MCF 10A (cell line): ENCODE measurements at regions of chr1 and their contacts with region 1.

Region 1: DNA sequence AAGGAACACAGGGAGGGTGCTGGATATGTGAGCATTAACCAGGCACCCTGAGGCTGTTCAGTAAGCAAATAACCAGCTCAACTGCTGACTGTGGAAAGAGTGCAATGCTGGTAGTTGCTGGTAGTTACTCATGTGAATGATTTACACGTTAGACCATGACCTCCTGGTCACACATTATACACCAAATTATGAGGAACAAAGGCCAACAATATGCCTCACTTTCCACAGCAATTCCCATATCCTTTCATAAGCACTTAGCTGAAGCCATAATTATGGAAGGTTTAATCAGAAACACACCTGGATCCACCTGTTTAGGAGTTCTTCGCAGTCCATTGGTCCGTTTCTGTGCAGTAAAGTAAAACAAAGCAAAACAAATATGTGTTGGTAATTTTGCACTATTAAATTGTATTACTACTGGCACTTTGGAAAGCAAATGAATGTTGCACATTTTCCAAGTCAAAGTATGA is 281.8 kb downstream of the VAV3 start:
- DNase-seq: peak; percentile 40
- H3K4me3 Mint-ChIP-seq: peak overlapping the region; percentile 60
- H3K27ac Mint-ChIP-seq: peak overlapping the region; percentile 85
- H3K4me1 Mint-ChIP-seq: peaks cover 33% of the 10 kb centered on the region
- H3K27me3 Mint-ChIP-seq: no peaks in the 10 kb centered on the region
- CTCF ChIP-seq: no peak

Region 2: GRCh38 chr1:107600607-107601160 is 82.5 kb before region 1 on chr1:
- CTCF ChIA-PET with region 1: no interaction called
- POLR2A ChIA-PET with region 1: no interaction called
- intact Hi-C with region 1: no loop called
- DNase-seq: no peak
- H3K4me3 Mint-ChIP-seq: no peak overlapping the region
- H3K27ac Mint-ChIP-seq: no peak overlapping the region
- H3K4me1 Mint-ChIP-seq: peaks cover 4% of the 10 kb centered on the region
- H3K27me3 Mint-ChIP-seq: no peaks in the 10 kb centered on the region
- CTCF ChIP-seq: no peak

Region 3: GRCh38 chr1:107648071-107648470 is 35.2 kb before region 1 on chr1:
- CTCF ChIA-PET with region 1: interaction called, 4 read pairs
- POLR2A ChIA-PET with region 1: interaction called, 22 read pairs
- intact Hi-C with region 1: no loop called
- DNase-seq: peak; percentile 73
- H3K4me3 Mint-ChIP-seq: no peak overlapping the region
- H3K27ac Mint-ChIP-seq: peak overlapping the region; percentile 54
- H3K4me1 Mint-ChIP-seq: peaks cover 35% of the 10 kb centered on the region
- H3K27me3 Mint-ChIP-seq: no peaks in the 10 kb centered on the region
- CTCF ChIP-seq: no peak

Region 4: GRCh38 chr1:107662971-107663370 is 20.3 kb before region 1 on chr1:
- CTCF ChIA-PET with region 1: interaction called, 8 read pairs
- POLR2A ChIA-PET with region 1: interaction called, 48 read pairs
- intact Hi-C with region 1: no loop called
- DNase-seq: no peak
- H3K4me3 Mint-ChIP-seq: no peak overlapping the region
- H3K27ac Mint-ChIP-seq: no peak overlapping the region
- H3K4me1 Mint-ChIP-seq: no peaks in the 10 kb centered on the region
- H3K27me3 Mint-ChIP-seq: no peaks in the 10 kb centered on the region
- CTCF ChIP-seq: no peak

Region 5: DNA sequence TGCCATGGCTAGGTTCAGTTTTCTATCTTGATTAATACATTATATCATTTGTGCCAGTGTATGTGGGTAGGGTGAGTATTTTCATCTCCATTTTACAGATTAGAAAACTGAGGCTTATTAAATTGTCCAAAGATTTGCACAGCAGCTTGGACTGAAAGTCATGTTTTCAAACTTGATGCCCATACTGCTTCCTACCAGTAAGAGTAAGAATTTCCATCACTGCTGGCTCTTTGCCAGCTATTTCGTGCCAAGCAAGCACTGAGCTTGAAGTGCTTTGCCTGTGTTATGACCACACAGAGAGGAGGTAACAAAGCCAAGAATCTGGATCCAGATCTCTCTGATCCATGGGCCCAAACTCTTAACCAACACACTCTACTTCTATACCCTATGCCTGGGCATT is 13.2 kb before region 1 on chr1:
- CTCF ChIA-PET with region 1: interaction called, 8 read pairs
- POLR2A ChIA-PET with region 1: interaction called, 48 read pairs
- intact Hi-C with region 1: no loop called
- DNase-seq: peak; percentile 86
- H3K4me3 Mint-ChIP-seq: no peak overlapping the region
- H3K27ac Mint-ChIP-seq: no peak overlapping the region
- H3K4me1 Mint-ChIP-seq: peaks cover 18% of the 10 kb centered on the region
- H3K27me3 Mint-ChIP-seq: no peaks in the 10 kb centered on the region
- CTCF ChIP-seq: no peak

Region 6: DNA sequence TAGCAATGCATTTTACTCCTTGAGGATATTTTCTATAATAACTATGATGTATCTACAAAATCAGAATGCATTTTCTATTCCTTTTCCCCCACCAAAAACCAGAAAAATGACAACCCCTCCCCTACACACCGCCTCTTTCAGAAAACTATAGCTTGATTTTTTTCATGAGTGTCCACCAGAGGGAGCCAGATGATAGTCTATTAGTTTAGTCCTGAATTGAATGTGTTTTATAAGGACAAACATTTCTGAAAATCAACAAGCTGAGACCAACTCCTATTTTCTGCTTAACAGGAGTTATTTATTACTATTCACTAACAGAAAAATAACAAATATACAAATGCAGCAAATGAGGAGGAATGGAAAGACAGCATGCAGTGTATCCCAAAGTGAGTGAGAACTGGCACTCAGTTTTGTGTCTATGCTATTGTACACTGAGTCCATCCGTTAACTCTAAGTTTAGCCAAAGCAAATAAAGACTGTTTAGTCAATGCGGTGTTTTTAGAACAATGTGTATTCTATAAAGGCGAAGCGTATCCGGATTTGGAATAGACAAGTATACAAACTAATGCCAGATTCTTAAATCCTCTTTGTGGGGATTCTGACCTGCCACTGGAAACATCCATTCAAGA is 99.1 kb after region 1 on chr1:
- CTCF ChIA-PET with region 1: no interaction called
- POLR2A ChIA-PET with region 1: no interaction called
- intact Hi-C with region 1: no loop called
- DNase-seq: peak; percentile 68
- H3K4me3 Mint-ChIP-seq: no peak overlapping the region
- H3K27ac Mint-ChIP-seq: no peak overlapping the region
- H3K4me1 Mint-ChIP-seq: no peaks in the 10 kb centered on the region
- H3K27me3 Mint-ChIP-seq: no peaks in the 10 kb centered on the region
- CTCF ChIP-seq: peak; percentile 60